Motor neuron (in vitro differentiated cells): ENCODE measurements at regions of chr4 and their contacts with region 1.

Region 1: GRCh38 chr4:120049732-120050494 is 16.7 kb downstream of the MAD2L1 start:
- ATAC-seq: peak; percentile 86 to 99 (median 94)
- H3K4me3 ChIP-seq: no peak overlapping the region
- H3K27ac ChIP-seq: no peak overlapping the region
- H3K4me1 ChIP-seq: peaks cover 0 to 1% of the 10 kb centered on the region in 2 donors

Region 2: DNA sequence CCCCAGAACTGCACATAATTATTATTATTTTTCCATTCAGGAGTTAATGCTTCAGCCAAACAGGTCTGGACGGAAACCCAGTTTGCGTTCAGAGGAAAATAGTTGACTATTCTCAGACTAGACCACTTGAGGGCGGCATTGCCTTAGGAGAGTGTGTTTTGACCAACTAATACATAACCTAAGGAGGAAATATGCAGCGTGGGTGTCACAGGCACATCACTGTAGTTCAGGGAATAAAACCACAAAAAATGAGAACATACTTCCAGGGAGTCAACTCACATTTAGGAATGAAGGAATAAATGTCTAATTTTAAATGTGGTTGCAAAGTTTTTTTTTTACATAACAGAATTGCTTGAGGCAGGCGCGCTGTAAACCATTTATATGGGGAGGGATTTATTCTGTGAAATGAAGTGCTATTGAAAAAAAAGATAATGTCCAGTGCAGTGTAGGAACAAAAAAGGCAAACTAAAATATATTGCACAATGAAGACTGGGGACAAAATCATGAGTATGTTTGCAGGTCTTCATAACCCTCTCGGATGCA is 1068.0 kb before region 1 on chr4:
- in situ Hi-C with region 1: loop called in 2 of 9 experiments (anchors 25 kb)
- ATAC-seq: peak; percentile 62 to 95 (median 78)
- H3K4me3 ChIP-seq: no peak overlapping the region
- H3K27ac ChIP-seq: no peak overlapping the region
- H3K4me1 ChIP-seq: no peaks in the 10 kb centered on the region

Region 3: DNA sequence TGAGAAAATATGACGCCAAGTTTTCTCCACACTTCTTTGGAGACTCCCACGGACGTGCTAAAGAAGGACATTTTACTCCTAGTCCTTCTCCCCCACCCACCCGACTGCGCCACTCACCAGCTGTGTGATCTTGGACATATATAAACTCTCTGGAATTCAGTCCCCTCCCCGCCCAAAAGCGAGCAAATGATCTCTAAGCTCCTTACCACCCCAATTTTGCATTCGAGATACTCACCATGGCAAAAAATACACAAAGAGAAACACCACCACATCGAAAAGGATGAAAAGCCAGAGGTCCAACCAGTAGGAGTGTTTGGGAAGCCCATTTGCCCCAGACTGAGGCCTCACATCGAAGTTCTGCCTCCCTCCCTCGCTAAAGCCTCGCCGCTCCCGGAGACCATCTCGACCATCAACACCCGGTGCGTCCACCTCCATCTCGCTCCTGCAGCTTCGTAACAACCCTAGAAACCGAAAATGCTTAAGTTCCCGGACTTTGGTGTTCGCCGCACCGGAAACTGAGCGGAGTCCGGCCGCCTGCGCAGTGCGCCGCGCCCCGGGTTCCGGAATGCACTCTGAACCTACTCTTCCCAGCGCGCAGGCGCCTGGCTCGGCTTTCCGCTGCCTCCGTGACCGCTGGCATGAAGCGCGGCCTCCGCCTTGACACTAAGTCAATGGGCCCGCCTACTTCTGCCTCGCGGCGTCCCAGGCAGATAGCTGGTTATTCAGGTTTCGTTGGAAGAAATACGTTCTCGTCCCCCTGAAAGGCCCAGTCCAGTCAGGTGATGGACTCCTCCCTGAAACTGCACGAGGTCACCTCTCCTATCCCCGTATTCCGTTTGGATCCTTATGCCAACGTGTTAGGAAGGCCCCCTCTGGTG is 749.6 kb before region 1 on chr4:
- in situ Hi-C with region 1: loop called in 2 of 9 experiments (anchors 25 kb)
- ATAC-seq: peak; percentile 88 to 99 (median 98)
- H3K4me3 ChIP-seq: peak overlapping the region; percentile 53 to 64 (median 57)
- H3K27ac ChIP-seq: peak overlapping the region; percentile 40 to 54
- H3K4me1 ChIP-seq: peaks cover 9 to 12% of the 10 kb centered on the region in 2 donors

Region 4: DNA sequence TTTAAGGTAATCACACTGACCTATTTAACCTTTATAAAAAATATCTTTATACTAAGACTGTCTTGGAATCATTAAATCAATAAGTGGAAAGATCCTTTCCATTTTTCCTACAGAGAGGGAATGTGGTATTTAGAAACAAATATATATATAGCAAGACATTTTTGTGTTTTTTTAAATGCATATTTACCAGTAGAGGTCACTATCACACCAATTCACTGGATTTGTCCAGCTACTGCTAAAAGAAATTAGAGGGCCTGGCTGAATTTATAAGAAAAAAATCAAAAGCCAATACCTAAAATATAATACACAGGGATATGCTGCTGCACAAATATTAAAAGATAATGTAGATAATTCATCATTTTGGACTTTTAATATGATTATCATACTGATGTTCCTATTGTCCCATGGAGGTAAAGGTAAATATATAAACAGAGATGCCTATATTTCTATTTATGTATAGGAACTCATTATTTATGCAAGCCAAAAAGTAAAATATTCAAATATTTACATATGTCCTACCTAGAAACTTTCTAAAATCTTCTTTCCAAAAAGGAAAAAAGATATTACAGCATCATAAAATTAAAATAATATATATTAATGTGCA is 490.8 kb before region 1 on chr4:
- in situ Hi-C with region 1: loop called in 1 of 9 experiments (anchors 25 kb)
- ATAC-seq: peak in 3 of 8 experiments; percentile 28 to 48 (median 30)
- H3K4me3 ChIP-seq: no peak overlapping the region
- H3K27ac ChIP-seq: no peak overlapping the region
- H3K4me1 ChIP-seq: no peaks in the 10 kb centered on the region

Region 5: GRCh38 chr4:119628308-119629141 is 421.4 kb before region 1 on chr4 and contains the start of gene PDE5A:
- in situ Hi-C with region 1: loop called in 3 of 9 experiments (anchors 25 kb)
- ATAC-seq: peak; percentile 82 to 91 (median 88)
- H3K4me3 ChIP-seq: peak within 1 kb of the TSS; percentile 53 to 87 (median 73)
- H3K27ac ChIP-seq: no peak within 1 kb of the TSS
- H3K4me1 ChIP-seq: peaks cover 0 to 8% of the 10 kb centered on the region in 2 donors
- total RNA-seq, gene PDE5A: 4.0 to 24.5 (median 8.0) TPM